ENCODE measurements at regions of chr5 and their contacts with region 1.

Region 1: DNA sequence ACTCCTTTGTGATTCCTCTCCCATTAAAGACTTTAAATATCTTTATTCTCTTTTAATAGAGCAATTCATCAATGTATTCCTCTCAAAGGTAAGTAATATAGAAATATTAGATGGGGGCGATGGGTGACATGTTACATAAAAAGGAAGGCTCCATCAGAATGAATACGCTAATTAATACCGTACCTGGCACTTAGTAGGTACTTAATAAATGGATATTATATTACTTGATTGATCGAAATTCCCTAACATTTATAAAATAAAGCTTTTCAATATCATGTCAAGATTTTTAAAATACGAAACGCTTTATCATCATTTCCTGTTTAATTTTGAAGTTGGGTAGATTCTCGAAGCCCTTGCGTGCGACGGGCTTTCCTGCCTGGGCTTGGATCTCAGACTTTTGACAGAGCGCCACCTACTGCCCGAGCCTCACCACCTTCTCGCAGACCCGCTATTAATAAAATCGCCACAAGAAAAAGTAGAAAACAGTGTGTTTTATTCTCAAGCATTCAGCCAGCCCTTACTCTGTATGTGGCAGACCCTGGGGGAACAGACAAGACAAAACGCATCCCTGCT is 99.4 kb downstream of the C5orf15 start:
- DNase-seq: peak; percentile 73 to 83 (median 78)
- H3K4me3 ChIP-seq: peak overlapping the region in 57 of 59 donors; percentile 8 to 68 (median 45)
- H3K27ac ChIP-seq: peak overlapping the region in 37 of 59 donors; percentile 5 to 84 (median 53)
- H3K27me3 ChIP-seq: no peaks in the 10 kb centered on the region
- CTCF ChIP-seq: peak; percentile 55 to 91 (median 82)

Region 2: DNA sequence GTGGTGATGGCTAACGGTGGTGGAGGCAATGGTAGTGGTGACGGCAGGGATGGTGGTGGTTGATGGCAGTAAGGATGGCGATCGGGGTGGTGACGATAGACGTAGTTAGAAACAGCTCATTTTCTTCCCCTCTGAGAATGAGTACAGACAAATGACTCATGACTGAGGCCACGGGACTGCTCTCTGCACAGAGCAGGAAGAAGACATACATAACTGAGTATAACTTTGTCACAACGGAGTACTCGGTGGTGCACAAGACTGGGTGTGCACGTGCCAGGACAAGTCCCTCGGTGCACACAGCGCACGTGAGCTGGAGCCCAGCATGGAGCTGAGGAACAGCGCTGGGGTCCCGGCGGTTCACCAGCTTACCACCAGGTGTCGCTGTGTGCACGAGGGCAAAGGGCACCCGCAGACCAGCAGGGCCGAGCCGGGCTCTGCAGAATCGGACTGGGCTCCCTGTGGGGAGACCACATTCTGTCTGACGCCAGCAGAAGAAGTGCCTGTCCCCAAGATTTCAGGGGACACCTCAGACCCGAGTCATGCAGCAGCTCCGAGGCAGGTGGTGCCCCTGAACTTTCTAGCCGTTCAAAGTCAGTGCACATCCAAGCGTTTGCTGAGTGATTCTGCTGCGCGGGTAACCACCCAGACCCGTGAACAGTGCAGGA is 445.3 kb before region 1 on chr5:
- intact Hi-C with region 1: loop called (anchors 10 kb)
- DNase-seq: peak in 7 of 10 donors; percentile 28 to 72 (median 51)
- H3K4me3 ChIP-seq: no peak overlapping the region
- H3K27ac ChIP-seq: peak overlapping the region in 5 of 59 donors; percentile 6 to 44 (median 24)
- H3K27me3 ChIP-seq: no peaks in the 10 kb centered on the region
- CTCF ChIP-seq: peak; percentile 69 to 95 (median 92)

Region 3: DNA sequence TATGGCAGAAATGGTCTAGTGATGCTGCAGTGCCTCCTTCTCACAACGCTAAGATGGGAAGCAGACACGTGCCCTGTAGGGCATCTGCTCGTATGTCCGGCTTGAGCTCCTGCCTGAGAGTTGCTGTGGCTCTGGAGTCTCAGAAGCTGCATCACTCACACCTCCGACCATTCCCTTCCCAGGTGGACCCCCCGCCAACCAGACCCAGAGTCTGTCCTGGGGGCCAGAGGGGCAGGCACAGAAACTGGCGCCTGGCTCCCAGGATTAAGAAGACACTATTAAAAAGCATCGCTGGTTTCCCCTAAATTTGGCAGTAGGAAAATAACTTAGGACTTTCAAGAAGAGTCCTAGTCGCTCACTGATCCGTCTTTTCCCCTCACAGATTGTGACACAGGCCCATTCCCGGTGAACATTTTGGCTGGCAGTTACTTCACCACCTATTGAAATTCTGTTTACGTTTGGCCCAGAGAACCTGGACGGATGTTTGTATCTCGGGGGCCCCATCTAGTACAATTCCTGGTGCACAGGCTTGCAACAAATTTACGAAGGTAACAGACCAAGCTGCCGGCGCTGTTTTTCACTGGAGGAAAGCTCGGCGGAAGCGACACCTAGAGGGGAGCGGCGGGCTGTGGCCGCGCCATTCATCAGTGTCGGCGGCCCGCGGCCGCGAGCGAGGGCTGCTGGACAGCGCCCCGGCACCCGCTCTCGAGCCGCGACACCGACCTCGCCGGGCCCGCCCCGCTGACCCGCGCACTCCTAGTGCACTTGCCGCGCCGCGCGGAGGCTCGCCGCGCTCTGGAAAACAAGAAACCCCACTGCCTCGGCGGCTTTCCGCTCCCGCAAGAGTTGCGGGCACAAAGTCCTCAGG is 258.3 kb before region 1 on chr5:
- intact Hi-C with region 1: loop called (anchors 10 kb)
- DNase-seq: peak in 9 of 10 donors; percentile 44 to 82 (median 64)
- H3K4me3 ChIP-seq: peak overlapping the region; percentile 37 to 76 (median 61)
- H3K27ac ChIP-seq: peak overlapping the region in 25 of 59 donors; percentile 10 to 80 (median 65)
- H3K27me3 ChIP-seq: peaks cover 0 to 68% (median 17%) of the 10 kb centered on the region in 45 donors
- CTCF ChIP-seq: peak in 55 of 56 donors; percentile 10 to 79 (median 63)

Region 4: DNA sequence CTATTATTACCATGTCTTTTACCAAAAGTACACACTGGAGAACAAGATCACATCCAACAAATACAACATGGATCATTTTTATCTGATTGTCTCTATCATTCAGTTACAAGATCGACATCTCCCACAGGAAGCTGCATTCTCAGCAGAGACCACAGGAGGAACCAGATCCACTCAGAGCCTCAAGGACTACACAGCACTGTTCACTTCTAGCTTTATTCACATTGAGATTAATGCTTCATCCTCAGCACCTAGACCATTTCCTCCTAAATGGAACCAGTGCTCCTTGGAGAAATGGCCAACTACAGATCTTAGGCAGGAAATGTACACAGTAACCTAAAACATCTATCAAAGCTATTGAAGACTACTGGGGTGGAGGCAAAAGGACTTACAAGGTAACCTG is 112.7 kb after region 1 on chr5:
- intact Hi-C with region 1: loop called in 1 of 2 experiments (anchors 5 kb)
- DNase-seq: no peak
- H3K4me3 ChIP-seq: no peak overlapping the region
- H3K27ac ChIP-seq: peak overlapping the region in 1 of 59 donors; percentile 20
- H3K27me3 ChIP-seq: no peaks in the 10 kb centered on the region
- CTCF ChIP-seq: no peak